HAP-1 (cell line): ENCODE measurements at regions of chr9 and their contacts with region 1.

Region 1: DNA sequence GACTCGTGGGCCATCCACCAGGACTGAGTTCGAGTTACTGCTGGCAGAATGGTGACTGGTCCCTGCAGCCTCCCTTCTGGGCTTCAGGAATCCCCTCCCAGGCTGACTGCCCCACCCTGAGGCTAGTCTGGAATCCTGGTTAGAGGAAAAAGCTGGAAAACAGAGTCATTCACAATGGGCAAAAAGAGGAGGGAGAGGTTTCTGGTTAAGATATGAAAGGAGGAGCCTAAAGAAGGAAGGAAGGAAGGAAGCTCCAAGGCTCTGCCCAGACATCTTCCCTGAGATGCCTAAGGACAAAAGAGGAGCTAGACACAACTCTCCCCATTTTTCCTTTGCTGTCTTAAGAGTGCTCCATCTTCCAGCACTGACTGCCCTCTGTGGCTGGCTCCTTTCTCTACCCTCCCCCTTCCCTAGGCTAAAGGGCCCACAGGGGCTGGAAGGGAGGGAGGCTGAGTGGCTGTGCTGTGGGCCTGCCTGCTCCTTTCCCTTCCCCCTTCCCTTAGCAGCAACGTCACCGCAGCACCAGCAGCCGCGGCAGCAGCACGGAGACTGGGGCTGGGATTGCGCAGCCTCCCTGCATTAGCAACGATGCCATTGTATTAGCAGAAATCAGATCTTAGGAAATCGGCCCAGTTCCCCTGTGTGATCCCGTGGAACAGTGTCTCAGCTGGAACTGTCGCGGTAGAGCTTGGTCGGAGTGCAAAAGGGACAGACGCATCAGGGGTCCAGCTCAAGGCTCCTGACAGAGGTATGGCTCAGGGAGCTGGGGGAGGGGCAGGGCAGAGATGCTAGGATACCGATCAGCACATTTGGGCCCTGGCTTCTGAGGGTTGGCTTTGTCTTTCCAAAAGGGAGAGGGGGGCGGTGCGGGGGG is 48.7 kb downstream of the RUSC2 start:
- DNase-seq: no peak
- H3K4me3 ChIP-seq: no peak overlapping the region
- H3K4me1 ChIP-seq: no peaks in the 10 kb centered on the region
- H3K27me3 ChIP-seq: no peaks in the 10 kb centered on the region

Region 2: GRCh38 chr9:35426627-35427026 is 112.0 kb before region 1 on chr9:
- in situ Hi-C with region 1: loop called (anchors 25 kb)
- DNase-seq: no peak
- H3K4me3 ChIP-seq: no peak overlapping the region
- H3K4me1 ChIP-seq: peaks cover 5% of the 10 kb centered on the region; the same call in 1 of the 2 replicates
- H3K27me3 ChIP-seq: no peaks in the 10 kb centered on the region

Region 3: GRCh38 chr9:35726881-35727438 is 188.4 kb after region 1 on chr9:
- in situ Hi-C with region 1: no loop called
- DNase-seq: no peak
- H3K4me3 ChIP-seq: no peak overlapping the region
- H3K4me1 ChIP-seq: peaks cover 34% of the 10 kb centered on the region
- H3K27me3 ChIP-seq: no peaks in the 10 kb centered on the region